GM12878 (cell line): ENCODE measurements at regions of chr15 and their contacts with region 1.

Region 1: GRCh38 chr15:45457641-45458433 is 64.7 kb downstream of the SLC30A4 start:
- DNase-seq: peak; percentile 69
- ATAC-seq: peak; percentile 72
- H3K4me3 ChIP-seq: peak overlapping the region; percentile 69
- H3K27ac ChIP-seq: peak overlapping the region; percentile 30
- H3K4me1 ChIP-seq: peaks cover 24% of the 10 kb centered on the region
- H3K27me3 ChIP-seq: no peaks in the 10 kb centered on the region
- CTCF ChIP-seq: peak; percentile 57 to 87 (median 62); a peak in 5 of 6 replicates
- EP300 ChIP-seq: no peak
- POLR2A ChIP-seq: no peak
- RAD21 ChIP-seq: peak; percentile 95

Region 2: GRCh38 chr15:45198337-45199135 is 259.3 kb before region 1 on chr15:
- CTCF ChIA-PET with region 1: interaction called, 31 read pairs
- POLR2A ChIA-PET with region 1: no interaction called
- RAD21 ChIA-PET with region 1: interaction called, 5 read pairs
- SMC1A ChIA-PET with region 1: interaction called, 7 read pairs
- in situ Hi-C with region 1: no loop called
- intact Hi-C with region 1: no loop called
- DNase-seq: peak; percentile 98
- ATAC-seq: peak; percentile 63
- H3K4me3 ChIP-seq: peak overlapping the region; percentile 86
- H3K27ac ChIP-seq: peak overlapping the region; percentile 95
- H3K4me1 ChIP-seq: no peaks in the 10 kb centered on the region; the same call in none of the 2 replicates
- H3K27me3 ChIP-seq: no peaks in the 10 kb centered on the region
- CTCF ChIP-seq: peak; percentile 71 to 81 (median 80)
- EP300 ChIP-seq: peak in 1 of 2 experiments; percentile 90; a peak in 1 of 4 replicates
- POLR2A ChIP-seq: peak; percentile 96
- RAD21 ChIP-seq: no peak

Region 3: GRCh38 chr15:45263003-45263402 is 194.8 kb before region 1 on chr15:
- CTCF ChIA-PET with region 1: no interaction called
- POLR2A ChIA-PET with region 1: no interaction called
- RAD21 ChIA-PET with region 1: no interaction called
- SMC1A ChIA-PET with region 1: no interaction called
- in situ Hi-C with region 1: no loop called
- intact Hi-C with region 1: no loop called
- DNase-seq: no peak
- ATAC-seq: no peak
- H3K4me3 ChIP-seq: no peak overlapping the region
- H3K27ac ChIP-seq: no peak overlapping the region
- H3K4me1 ChIP-seq: no peaks in the 10 kb centered on the region
- H3K27me3 ChIP-seq: no peaks in the 10 kb centered on the region
- CTCF ChIP-seq: no peak
- EP300 ChIP-seq: no peak
- POLR2A ChIP-seq: no peak
- RAD21 ChIP-seq: no peak

Region 4: GRCh38 chr15:45391746-45392583 is 65.9 kb before region 1 on chr15:
- CTCF ChIA-PET with region 1: interaction called, 10 read pairs
- POLR2A ChIA-PET with region 1: no interaction called
- RAD21 ChIA-PET with region 1: no interaction called
- SMC1A ChIA-PET with region 1: no interaction called
- in situ Hi-C with region 1: no loop called
- intact Hi-C with region 1: no loop called
- DNase-seq: peak; percentile 90
- ATAC-seq: peak; percentile 96
- H3K4me3 ChIP-seq: 0 out of 2 replicates have a peak overlapping the region, but pooled peaks have one; percentile 11
- H3K27ac ChIP-seq: peak overlapping the region; percentile 72
- H3K4me1 ChIP-seq: peaks cover 21% of the 10 kb centered on the region
- H3K27me3 ChIP-seq: no peaks in the 10 kb centered on the region
- CTCF ChIP-seq: no peak
- EP300 ChIP-seq: peak; percentile 76 to 85
- POLR2A ChIP-seq: no peak
- RAD21 ChIP-seq: no peak

Region 5: DNA sequence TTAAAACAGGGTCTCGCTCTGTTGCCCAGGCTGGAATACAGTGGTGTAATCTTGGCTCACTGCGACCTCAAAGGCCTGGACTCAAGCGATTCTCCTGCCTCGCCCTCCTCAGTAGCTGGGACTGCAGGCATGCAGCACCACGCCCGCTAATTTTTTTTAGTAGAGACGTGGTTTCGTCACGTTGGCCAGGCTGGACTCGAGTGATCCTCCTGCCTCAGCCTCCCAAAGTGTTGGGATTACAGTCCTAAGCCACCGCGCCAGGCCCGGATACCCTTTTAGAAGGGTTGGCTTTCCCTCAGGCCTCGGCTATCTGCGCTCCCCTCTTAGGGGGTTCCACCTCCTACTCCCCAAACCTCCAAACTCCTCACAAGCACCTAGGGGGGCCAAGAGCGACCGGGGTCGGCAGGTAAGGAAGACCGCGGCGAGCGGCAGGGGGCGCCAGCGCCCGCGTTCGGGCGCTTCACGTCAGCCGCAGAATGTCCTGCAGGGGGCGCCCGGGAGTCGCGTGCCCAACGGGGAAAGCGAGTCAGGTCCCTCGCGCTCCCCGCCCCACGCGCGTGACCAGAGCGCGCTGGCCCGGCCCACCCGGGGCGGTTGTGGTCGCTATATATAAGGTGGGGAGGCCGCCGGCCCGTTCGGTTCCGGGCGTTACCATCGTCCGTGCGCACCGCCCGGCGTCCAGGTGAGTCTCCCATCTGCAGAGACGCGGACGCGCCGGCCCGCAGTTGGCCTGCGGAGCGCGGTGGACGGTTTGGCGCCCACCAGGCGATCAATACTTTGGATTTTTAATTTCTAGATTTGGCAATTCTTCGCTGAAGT is 27.7 kb before region 1 on chr15:
- CTCF ChIA-PET with region 1: interaction called, 194 read pairs
- POLR2A ChIA-PET with region 1: no interaction called
- RAD21 ChIA-PET with region 1: interaction called, 38 read pairs
- SMC1A ChIA-PET with region 1: interaction called, 30 read pairs
- in situ Hi-C with region 1: no loop called
- intact Hi-C with region 1: loop called (anchors 1 kb)
- DNase-seq: no peak
- ATAC-seq: peak; percentile 98
- H3K4me3 ChIP-seq: peak overlapping the region; percentile 61; the same call in 1 of the 2 replicates
- H3K27ac ChIP-seq: no peak overlapping the region
- H3K4me1 ChIP-seq: 0 out of 2 replicates have a peak, but pooled peaks cover 3% of the 10 kb centered on the region
- H3K27me3 ChIP-seq: no peaks in the 10 kb centered on the region
- CTCF ChIP-seq: peak; percentile 99 to 100 (median 99)
- EP300 ChIP-seq: no peak
- POLR2A ChIP-seq: no peak
- RAD21 ChIP-seq: peak; percentile 79

Region 6: GRCh38 chr15:45594319-45594718 is 136.5 kb after region 1 on chr15:
- CTCF ChIA-PET with region 1: interaction called, 37 read pairs
- POLR2A ChIA-PET with region 1: no interaction called
- RAD21 ChIA-PET with region 1: no interaction called
- SMC1A ChIA-PET with region 1: interaction called, 7 read pairs
- in situ Hi-C with region 1: no loop called
- intact Hi-C with region 1: no loop called
- DNase-seq: no peak
- ATAC-seq: no peak
- H3K4me3 ChIP-seq: no peak overlapping the region
- H3K27ac ChIP-seq: no peak overlapping the region
- H3K4me1 ChIP-seq: no peaks in the 10 kb centered on the region
- H3K27me3 ChIP-seq: no peaks in the 10 kb centered on the region
- CTCF ChIP-seq: no peak
- EP300 ChIP-seq: no peak
- POLR2A ChIP-seq: no peak
- RAD21 ChIP-seq: no peak

Region 7: DNA sequence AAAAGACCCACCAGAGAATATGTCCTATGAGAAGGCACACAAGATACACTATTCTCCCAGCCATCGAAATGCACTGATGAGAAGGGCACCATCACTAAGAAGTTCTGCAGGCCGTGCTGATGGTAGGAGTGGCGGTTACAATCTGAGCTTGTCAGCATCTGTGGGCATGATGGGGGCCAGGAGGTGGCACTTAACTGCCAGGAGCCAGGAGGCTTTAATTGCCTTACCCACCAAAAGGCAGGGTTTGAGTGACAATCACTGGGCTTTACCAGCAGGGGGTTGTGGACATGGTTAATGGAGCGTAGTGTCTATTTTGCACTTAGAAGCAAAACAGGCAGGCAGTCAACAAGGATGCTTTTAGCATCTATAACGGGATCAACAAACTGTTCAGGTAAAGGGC is 161.0 kb after region 1 on chr15:
- CTCF ChIA-PET with region 1: interaction called, 245 read pairs
- POLR2A ChIA-PET with region 1: interaction called, 4 read pairs
- RAD21 ChIA-PET with region 1: interaction called, 83 read pairs
- SMC1A ChIA-PET with region 1: interaction called, 115 read pairs
- in situ Hi-C with region 1: loop called (anchors 5 kb)
- intact Hi-C with region 1: loop called (anchors 1 kb)
- DNase-seq: no peak
- ATAC-seq: peak; percentile 69
- H3K4me3 ChIP-seq: no peak overlapping the region
- H3K27ac ChIP-seq: no peak overlapping the region
- H3K4me1 ChIP-seq: no peaks in the 10 kb centered on the region
- H3K27me3 ChIP-seq: no peaks in the 10 kb centered on the region
- CTCF ChIP-seq: 0 out of 6 replicates have a peak, but pooled peaks of 2 of the 3 experiments have one; percentile 13 to 21
- EP300 ChIP-seq: no peak
- POLR2A ChIP-seq: no peak
- RAD21 ChIP-seq: no peak